Activated CD4-positive, alpha-beta T cell treated with anti-CD3 and anti-CD28 coated beads, Interleukin-2, amount 10 ng/mL, durations not matched to agents 7 days and 5 days (primary cell): ENCODE measurements at regions of chr19 and their contacts with region 1.

Region 1: DNA sequence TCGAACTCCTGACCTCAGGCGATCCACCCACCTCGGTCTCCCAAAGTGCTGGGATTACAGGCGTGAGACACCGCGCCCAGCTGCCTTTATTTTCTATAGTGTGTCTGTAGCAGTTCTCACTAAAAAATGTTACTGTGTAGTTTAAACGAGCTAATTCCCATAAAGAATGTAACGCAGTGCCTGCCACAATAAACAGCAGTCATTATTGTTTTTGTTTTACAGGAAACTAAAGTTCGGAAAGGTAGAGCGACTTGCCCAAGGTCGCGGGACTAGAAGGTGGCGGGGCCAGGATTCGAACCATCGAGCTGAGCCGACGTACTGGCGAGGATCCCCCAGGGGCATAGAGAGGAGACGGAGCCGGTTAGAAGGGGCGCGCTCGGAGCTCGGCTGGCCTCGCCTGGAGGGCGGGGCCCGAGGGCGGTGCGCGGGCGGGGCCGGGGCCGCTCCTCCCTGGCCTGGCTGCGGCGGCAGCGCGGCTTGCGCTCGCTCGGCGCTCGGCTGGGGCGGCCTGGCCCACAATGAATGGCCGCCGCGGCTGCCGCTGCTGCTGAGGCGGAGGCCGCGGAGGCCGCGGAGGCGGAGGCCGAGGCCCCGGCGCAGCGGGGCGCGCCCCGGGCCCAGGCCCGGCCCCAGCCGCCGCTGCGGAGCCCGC is at the start of gene NACC1:
- DNase-seq: peak; percentile 87
- H3K4me3 Mint-ChIP-seq: peak within 1 kb of the TSS; percentile 93
- H3K27ac Mint-ChIP-seq: peak within 1 kb of the TSS; percentile 95
- H3K4me1 Mint-ChIP-seq: peaks cover 48% of the 10 kb centered on the region
- H3K27me3 Mint-ChIP-seq: no peaks in the 10 kb centered on the region
- total RNA-seq, gene NACC1: 57.8 to 63.8 TPM

Region 2: GRCh38 chr19:13132471-13133180 is 14.7 kb after region 1 on chr19:
- CTCF ChIA-PET with region 1: interaction called, 10 read pairs
- POLR2A ChIA-PET with region 1: no interaction called
- DNase-seq: peak; percentile 66
- H3K4me3 Mint-ChIP-seq: peak overlapping the region; percentile 30
- H3K27ac Mint-ChIP-seq: peak overlapping the region; percentile 84
- H3K4me1 Mint-ChIP-seq: peaks cover 33% of the 10 kb centered on the region
- H3K27me3 Mint-ChIP-seq: no peaks in the 10 kb centered on the region